Activated naive CD4-positive, alpha-beta T cell treated with anti-CD3 and anti-CD28 coated beads for 36 hours (primary cell): ENCODE measurements at regions of chr9 and their contacts with region 1.

Region 1: GRCh38 chr9:114653556-114654159 is 3.9 kb downstream of the TEX53 start:
- DNase-seq: peak; percentile 92
- H3K4me3 Mint-ChIP-seq: no peak overlapping the region
- H3K27ac Mint-ChIP-seq: no peak overlapping the region
- H3K4me1 Mint-ChIP-seq: peaks cover 31% of the 10 kb centered on the region
- H3K27me3 Mint-ChIP-seq: no peaks in the 10 kb centered on the region

Region 2: DNA sequence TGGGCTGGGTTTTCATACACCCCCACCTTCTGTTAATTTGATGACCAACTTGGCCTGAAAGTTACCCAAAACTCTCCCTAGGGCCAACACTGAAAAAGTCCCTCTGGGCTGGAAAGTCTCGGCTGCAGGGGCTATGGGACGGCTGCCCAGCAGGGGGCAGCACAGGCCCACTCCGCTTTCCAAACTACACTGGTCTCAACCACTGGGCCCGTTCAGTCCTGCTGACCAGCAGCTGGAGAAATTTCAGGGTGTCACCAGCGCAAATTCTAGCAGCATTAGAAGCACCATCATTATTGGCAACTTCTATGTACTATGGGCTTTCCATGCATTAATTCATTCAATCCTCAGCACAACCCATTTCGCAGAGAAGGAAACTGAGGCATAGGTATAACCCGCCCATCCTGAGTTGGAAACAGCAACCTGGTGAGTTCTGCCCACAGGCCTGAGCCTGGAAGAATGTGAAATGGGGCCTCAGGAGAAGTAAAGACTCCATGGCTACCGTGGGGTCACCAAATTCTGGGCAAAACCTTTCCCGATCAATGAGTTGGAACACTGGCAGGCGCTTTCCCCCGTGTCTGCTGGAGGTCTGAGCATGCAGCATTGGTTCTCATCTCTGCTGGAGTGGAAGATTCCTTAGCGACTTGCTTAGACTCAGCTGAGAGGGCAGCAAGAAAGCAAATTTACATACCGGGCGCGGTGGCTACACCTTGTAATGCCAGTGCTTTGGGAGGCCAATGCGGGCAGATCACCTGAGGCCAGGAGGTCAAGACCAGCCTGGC is 314.3 kb before region 1 on chr9:
- CTCF ChIA-PET with region 1: interaction called, 3 read pairs
- intact Hi-C with region 1: loop called (anchors 1 kb)
- DNase-seq: peak; percentile 66
- H3K4me3 Mint-ChIP-seq: no peak overlapping the region
- H3K27ac Mint-ChIP-seq: peak overlapping the region; percentile 66
- H3K4me1 Mint-ChIP-seq: peaks cover 15% of the 10 kb centered on the region
- H3K27me3 Mint-ChIP-seq: no peaks in the 10 kb centered on the region

Region 3: GRCh38 chr9:114413861-114414301 is 239.8 kb before region 1 on chr9:
- CTCF ChIA-PET with region 1: interaction called, 133 read pairs
- intact Hi-C with region 1: no loop called
- DNase-seq: no peak
- H3K4me3 Mint-ChIP-seq: no peak overlapping the region
- H3K27ac Mint-ChIP-seq: no peak overlapping the region
- H3K4me1 Mint-ChIP-seq: no peaks in the 10 kb centered on the region
- H3K27me3 Mint-ChIP-seq: no peaks in the 10 kb centered on the region

Region 4: GRCh38 chr9:114487607-114488300 is 165.9 kb before region 1 on chr9:
- CTCF ChIA-PET with region 1: interaction called, 83 read pairs
- intact Hi-C with region 1: loop called (anchors 1 kb)
- DNase-seq: peak; percentile 81
- H3K4me3 Mint-ChIP-seq: no peak overlapping the region
- H3K27ac Mint-ChIP-seq: no peak overlapping the region
- H3K4me1 Mint-ChIP-seq: peaks cover 19% of the 10 kb centered on the region
- H3K27me3 Mint-ChIP-seq: no peaks in the 10 kb centered on the region

Region 5: DNA sequence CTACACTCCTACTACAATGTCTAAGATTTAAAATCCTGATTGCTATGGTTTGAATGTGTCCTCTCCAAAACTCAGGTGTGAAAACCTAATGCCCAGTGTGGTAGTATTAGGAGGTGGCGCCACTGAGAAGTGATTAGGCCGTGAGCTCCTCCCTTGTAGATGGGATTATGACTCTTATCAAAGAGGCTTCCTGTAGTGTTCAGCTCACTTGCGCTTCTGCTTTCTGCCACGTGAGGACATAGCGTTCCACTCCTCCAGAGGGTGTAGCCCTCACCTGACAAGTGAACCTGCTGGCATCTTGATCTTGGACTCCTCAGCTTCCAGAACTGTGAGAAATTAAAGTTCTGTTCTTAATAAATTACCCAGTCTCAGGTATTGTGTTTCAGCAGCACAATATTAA is 115.4 kb before region 1 on chr9:
- CTCF ChIA-PET with region 1: interaction called, 18 read pairs
- intact Hi-C with region 1: loop called (anchors 1 kb)
- DNase-seq: peak; percentile 62
- H3K4me3 Mint-ChIP-seq: no peak overlapping the region
- H3K27ac Mint-ChIP-seq: no peak overlapping the region
- H3K4me1 Mint-ChIP-seq: peaks cover 3% of the 10 kb centered on the region
- H3K27me3 Mint-ChIP-seq: no peaks in the 10 kb centered on the region

Region 6: GRCh38 chr9:114611516-114612271 is 42.0 kb before region 1 on chr9:
- CTCF ChIA-PET with region 1: interaction called, 9 read pairs
- intact Hi-C with region 1: loop called (anchors 1 kb)
- DNase-seq: peak; percentile 37
- H3K4me3 Mint-ChIP-seq: peak overlapping the region; percentile 79
- H3K27ac Mint-ChIP-seq: peak overlapping the region; percentile 82
- H3K4me1 Mint-ChIP-seq: peaks cover 52% of the 10 kb centered on the region
- H3K27me3 Mint-ChIP-seq: no peaks in the 10 kb centered on the region

Region 7: DNA sequence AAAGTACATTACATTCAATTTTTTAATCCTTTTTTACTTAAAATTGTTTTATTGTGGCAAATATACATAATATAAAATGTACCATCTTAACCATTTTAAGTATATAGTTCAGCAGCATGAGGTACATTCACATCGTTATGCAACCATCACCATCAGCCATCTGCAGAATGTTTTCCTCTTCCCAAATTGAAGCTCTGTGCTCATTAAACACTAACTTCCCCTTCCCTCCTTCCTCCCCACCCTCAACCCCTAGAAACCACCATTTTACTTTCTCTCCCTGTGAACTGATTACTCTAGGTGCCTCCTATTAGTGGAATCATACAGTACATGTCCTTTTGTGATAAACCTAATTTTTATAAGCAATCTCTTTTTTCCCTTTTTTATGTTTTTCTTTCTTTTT is 11.7 kb before region 1 on chr9:
- CTCF ChIA-PET with region 1: interaction called, 31 read pairs
- intact Hi-C with region 1: no loop called
- DNase-seq: no peak
- H3K4me3 Mint-ChIP-seq: no peak overlapping the region
- H3K27ac Mint-ChIP-seq: peak overlapping the region; percentile 1
- H3K4me1 Mint-ChIP-seq: peaks cover 5% of the 10 kb centered on the region
- H3K27me3 Mint-ChIP-seq: no peaks in the 10 kb centered on the region

Region 8: DNA sequence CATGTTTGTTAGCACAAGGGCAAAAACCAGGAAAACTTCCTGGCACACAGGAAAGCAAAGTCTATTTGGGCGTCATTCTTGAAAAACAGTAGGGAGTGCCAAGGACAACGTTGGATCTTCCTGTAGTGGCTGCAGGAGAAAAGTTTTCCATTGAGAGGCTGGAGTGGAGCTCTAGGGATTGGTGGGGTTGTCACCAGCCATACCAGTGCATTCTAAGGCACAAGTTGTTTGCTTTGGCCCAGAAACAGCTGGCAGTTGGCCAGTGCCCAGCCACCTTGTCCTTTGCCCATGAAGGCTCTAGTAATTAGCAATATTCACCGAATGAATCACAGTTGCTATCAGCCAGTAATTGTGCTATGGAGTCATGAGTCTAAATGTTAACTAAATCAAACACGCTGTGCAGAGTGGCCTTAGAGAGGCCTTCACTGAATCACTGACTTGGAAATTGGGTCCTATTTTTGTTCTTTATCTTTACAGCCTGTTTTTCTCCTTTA is 125.7 kb after region 1 on chr9:
- CTCF ChIA-PET with region 1: no interaction called
- intact Hi-C with region 1: no loop called
- DNase-seq: no peak
- H3K4me3 Mint-ChIP-seq: no peak overlapping the region
- H3K27ac Mint-ChIP-seq: no peak overlapping the region
- H3K4me1 Mint-ChIP-seq: peaks cover 24% of the 10 kb centered on the region
- H3K27me3 Mint-ChIP-seq: no peaks in the 10 kb centered on the region

Region 9: GRCh38 chr9:114914139-114914538 is 260.5 kb after region 1 on chr9:
- CTCF ChIA-PET with region 1: no interaction called
- intact Hi-C with region 1: no loop called
- DNase-seq: no peak
- H3K4me3 Mint-ChIP-seq: no peak overlapping the region
- H3K27ac Mint-ChIP-seq: peak overlapping the region; percentile 21
- H3K4me1 Mint-ChIP-seq: peaks cover 74% of the 10 kb centered on the region
- H3K27me3 Mint-ChIP-seq: no peaks in the 10 kb centered on the region